ENCODE measurements at regions of chr3 and their contacts with region 1.

Region 1: DNA sequence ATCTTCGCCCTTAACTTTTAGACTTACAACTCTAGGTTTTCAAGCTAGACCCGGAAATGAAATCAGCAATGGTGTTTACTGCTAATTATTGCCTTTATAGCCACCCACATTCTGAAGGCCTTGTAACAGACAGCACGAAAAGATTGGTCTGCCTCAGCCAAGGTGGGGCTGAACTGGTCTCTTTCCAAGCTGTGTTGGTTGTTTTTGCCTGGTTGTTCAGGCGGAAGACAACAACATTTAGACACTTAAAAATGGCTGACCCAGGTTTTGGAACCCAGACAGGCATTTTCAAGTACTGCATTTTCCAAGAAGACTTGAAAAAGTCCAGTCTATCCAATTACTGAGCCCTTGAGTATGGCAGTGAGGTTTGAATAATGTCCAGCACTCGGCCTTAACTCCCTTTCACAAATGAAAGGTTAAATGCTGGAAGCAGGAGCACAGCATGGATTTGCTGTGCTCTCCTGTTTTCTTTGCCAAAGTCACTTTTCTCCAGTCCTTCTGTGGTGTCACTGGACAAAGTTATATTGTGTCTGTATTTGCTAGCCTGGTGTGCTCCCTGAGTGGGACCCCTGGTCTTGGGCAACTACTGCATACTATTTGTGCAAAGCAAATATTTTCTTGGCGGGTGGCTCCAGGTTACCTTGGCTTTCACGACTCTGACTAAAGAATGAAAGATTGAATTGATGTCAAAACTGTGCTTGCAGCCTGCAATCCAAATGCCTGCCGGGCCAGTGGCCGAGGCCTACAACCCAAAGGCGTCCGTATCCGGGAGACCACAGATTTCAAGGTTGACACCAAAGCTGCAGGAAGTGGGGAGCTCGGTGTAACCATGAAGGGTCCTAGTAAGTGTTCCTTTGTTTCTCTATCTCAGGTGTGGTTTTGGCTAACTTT is 93.5 kb downstream of the FLNB start:
- DNase-seq: peak; percentile 98
- ATAC-seq: peak; percentile 92
- H3K4me3 ChIP-seq: peak overlapping the region in 1 of 3 experiments; percentile 45; a peak in 1 of 6 replicates
- H3K27ac ChIP-seq: peak overlapping the region; percentile 90
- H3K4me1 ChIP-seq: peaks cover 74% of the 10 kb centered on the region
- H3K27me3 ChIP-seq: no peaks in the 10 kb centered on the region
- CTCF ChIP-seq: no peak
- EP300 ChIP-seq: peak; percentile 95 to 96
- POLR2A ChIP-seq: no peak
- RAD21 ChIP-seq: peak; percentile 43; the same call in 1 of the 2 replicates

Region 2: DNA sequence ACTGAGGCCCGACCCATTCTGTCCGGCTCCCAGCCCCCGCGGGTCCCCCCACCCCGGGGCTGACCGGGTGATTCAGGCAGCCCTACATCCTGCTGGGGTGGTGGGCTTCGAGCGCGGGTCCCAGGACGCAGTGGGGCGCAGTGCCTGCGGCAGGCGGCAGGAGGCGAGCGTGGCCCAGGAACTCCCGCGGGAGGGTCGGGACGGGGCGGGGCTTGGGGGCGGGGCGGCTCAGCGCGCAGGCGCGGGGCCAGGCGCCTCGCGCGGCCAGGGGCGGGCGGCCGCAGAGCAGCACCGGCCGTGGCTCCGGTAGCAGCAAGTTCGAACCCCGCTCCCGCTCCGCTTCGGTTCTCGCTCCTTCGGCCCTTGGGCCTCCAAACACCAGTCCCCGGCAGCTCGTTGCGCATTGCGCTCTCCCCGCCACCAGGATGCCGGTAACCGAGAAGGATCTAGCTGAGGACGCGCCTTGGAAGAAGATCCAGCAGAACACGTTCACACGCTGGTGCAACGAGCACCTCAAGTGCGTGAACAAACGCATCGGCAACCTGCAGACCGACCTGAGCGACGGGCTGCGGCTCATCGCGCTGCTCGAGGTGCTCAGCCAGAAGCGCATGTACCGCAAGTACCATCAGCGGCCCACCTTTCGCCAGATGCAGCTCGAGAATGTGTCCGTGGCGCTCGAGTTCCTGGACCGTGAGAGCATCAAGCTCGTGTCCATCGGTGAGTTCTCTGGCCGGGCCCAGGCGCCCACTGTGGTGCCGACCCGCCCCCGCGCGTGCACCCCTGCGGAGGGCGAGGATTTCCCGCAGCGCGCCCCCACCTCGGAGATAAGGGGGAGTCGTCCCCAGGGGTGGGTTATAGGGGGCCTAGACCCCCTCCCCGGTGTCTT is 93.4 kb before region 1 on chr3 and contains the start of gene FLNB:
- CTCF ChIA-PET with region 1: no interaction called
- POLR2A ChIA-PET with region 1: interaction called, 21 read pairs
- in situ Hi-C with region 1: no loop called
- intact Hi-C with region 1: loop called (anchors 2 kb)
- DNase-seq: peak; percentile 45
- ATAC-seq: peak; percentile 77
- H3K4me3 ChIP-seq: peak within 1 kb of the TSS; percentile 93 to 100 (median 99)
- H3K27ac ChIP-seq: peak within 1 kb of the TSS; percentile 74
- H3K4me1 ChIP-seq: peaks cover 55% of the 10 kb centered on the region
- H3K27me3 ChIP-seq: no peaks in the 10 kb centered on the region; a peak in 1 of 5 replicates
- CTCF ChIP-seq: peak; percentile 86
- EP300 ChIP-seq: no peak
- POLR2A ChIP-seq: peak; percentile 92 to 98
- RAD21 ChIP-seq: peak; percentile 83
- total RNA-seq, gene FLNB: 48.8 and 130 TPM in 2 replicates

Region 3: GRCh38 chr3:58025837-58026569 is 75.7 kb before region 1 on chr3:
- CTCF ChIA-PET with region 1: no interaction called
- POLR2A ChIA-PET with region 1: interaction called, 11 read pairs
- in situ Hi-C with region 1: no loop called
- intact Hi-C with region 1: loop called (anchors 5 kb)
- DNase-seq: peak; percentile 39
- ATAC-seq: no peak; the same call in 2 of the 3 replicates
- H3K4me3 ChIP-seq: no peak overlapping the region
- H3K27ac ChIP-seq: peak overlapping the region; percentile 24
- H3K4me1 ChIP-seq: peaks cover 90% of the 10 kb centered on the region
- H3K27me3 ChIP-seq: no peaks in the 10 kb centered on the region
- CTCF ChIP-seq: no peak
- EP300 ChIP-seq: no peak
- POLR2A ChIP-seq: no peak
- RAD21 ChIP-seq: no peak

Region 4: DNA sequence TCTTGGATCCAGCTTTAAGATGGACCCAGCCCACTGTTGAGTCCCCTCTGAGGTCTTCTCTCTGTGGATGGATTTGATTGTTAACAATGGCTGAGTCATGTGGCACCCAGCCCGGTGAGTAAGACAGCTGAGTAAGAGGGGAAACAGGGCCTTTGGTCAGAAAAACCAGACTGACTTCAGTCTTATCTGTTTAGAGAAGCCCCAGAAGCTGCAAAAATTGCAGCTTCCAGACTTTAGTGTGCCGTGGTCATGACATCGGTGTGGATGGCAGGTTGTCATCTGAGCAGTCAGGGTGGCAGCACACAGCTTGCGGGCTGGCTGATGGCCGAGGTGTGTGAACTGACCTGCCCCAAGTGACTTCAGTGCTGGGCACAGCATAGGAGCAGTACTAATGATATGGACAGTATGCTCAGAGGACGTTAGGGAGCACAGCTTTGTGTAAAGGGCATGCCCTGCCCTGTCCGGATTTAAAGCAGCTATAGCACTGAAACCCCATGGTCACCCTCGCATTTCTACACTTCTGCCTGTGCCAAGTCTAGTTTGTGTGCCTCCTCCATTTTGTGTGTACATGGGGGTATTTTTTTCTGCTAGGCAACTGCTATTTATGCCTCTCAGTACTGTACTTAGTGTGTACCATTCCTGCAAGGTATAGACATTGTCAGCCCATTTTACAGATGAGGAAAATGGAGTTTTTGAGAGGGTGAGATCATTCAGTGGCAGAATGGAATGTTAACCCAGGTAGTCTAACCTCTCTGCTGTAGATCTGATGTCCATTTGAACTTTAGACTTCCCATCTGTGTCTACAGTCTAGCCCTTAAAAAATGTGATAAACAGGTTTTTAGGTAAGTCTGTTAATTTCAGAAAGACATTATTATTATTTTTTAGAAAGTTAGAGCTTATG is 49.1 kb before region 1 on chr3:
- CTCF ChIA-PET with region 1: no interaction called
- POLR2A ChIA-PET with region 1: interaction called, 31 read pairs
- in situ Hi-C with region 1: no loop called
- intact Hi-C with region 1: no loop called
- DNase-seq: peak; percentile 83
- ATAC-seq: peak; percentile 42
- H3K4me3 ChIP-seq: peak overlapping the region in 1 of 3 experiments; percentile 20; a peak in 1 of 6 replicates
- H3K27ac ChIP-seq: peak overlapping the region; percentile 96
- H3K4me1 ChIP-seq: peaks cover 96% of the 10 kb centered on the region
- H3K27me3 ChIP-seq: no peaks in the 10 kb centered on the region
- CTCF ChIP-seq: no peak
- EP300 ChIP-seq: peak in 1 of 2 experiments; percentile 64; a peak in 1 of 4 replicates
- POLR2A ChIP-seq: no peak
- RAD21 ChIP-seq: no peak

Region 5: GRCh38 chr3:58066842-58067241 is 34.9 kb before region 1 on chr3:
- CTCF ChIA-PET with region 1: no interaction called
- POLR2A ChIA-PET with region 1: interaction called, 26 read pairs
- in situ Hi-C with region 1: no loop called
- intact Hi-C with region 1: loop called (anchors 5 kb)
- DNase-seq: peak; percentile 27
- ATAC-seq: no peak
- H3K4me3 ChIP-seq: no peak overlapping the region
- H3K27ac ChIP-seq: peak overlapping the region; percentile 77
- H3K4me1 ChIP-seq: peaks cover 96% of the 10 kb centered on the region
- H3K27me3 ChIP-seq: no peaks in the 10 kb centered on the region
- CTCF ChIP-seq: no peak
- EP300 ChIP-seq: no peak
- POLR2A ChIP-seq: no peak
- RAD21 ChIP-seq: no peak

Region 6: GRCh38 chr3:58177747-58178527 is 76.2 kb after region 1 on chr3:
- CTCF ChIA-PET with region 1: no interaction called
- POLR2A ChIA-PET with region 1: interaction called, 13 read pairs
- in situ Hi-C with region 1: no loop called
- intact Hi-C with region 1: no loop called
- DNase-seq: peak; percentile 67
- ATAC-seq: peak; percentile 44
- H3K4me3 ChIP-seq: peak overlapping the region in 1 of 3 experiments; percentile 57; a peak in 3 of 6 replicates
- H3K27ac ChIP-seq: peak overlapping the region; percentile 32
- H3K4me1 ChIP-seq: peaks cover 100% of the 10 kb centered on the region
- H3K27me3 ChIP-seq: peaks cover 0 to 16% of the 10 kb centered on the region in 2 experiments; a peak in 2 of 5 replicates
- CTCF ChIP-seq: peak; percentile 97
- EP300 ChIP-seq: no peak
- POLR2A ChIP-seq: no peak
- RAD21 ChIP-seq: peak; percentile 86